A549 (cell line): ENCODE measurements at regions of chr9 and their contacts with region 1.

Region 1: GRCh38 chr9:109616571-109617120 is 118.5 kb upstream of the PTPN3 start:
- DNase-seq: no peak
- ATAC-seq: no peak
- H3K4me3 ChIP-seq: no peak overlapping the region
- H3K27ac ChIP-seq: no peak overlapping the region
- H3K4me1 ChIP-seq: no peaks in the 10 kb centered on the region
- CTCF ChIP-seq: no peak
- EP300 ChIP-seq: no peak
- POLR2A ChIP-seq: no peak
- RAD21 ChIP-seq: no peak

Region 2: DNA sequence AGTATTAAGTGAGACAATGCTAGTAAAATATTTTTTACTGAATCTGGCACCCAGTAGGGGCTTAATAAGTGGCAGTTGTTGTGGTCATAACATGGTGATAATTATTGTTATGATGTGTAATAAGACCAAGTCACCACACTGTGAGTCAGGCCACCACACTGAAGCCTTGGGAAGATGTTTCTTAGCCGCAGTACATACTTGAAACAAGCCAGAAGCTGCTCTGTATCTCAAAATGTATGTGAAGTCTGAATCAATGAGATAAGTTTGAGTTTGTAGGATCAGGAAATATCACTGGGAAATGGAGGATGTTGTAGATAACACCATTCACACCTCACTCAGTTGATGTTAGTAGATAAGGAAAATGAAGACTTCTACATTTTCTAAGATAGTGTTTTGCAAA is 67.3 kb before region 1 on chr9:
- CTCF ChIA-PET with region 1: no interaction called
- POLR2A ChIA-PET with region 1: no interaction called
- DNase-seq: no peak
- ATAC-seq: no peak
- H3K4me3 ChIP-seq: no peak overlapping the region
- H3K27ac ChIP-seq: no peak overlapping the region
- H3K4me1 ChIP-seq: no peaks in the 10 kb centered on the region
- CTCF ChIP-seq: no peak
- EP300 ChIP-seq: no peak
- POLR2A ChIP-seq: no peak
- RAD21 ChIP-seq: no peak

Region 3: DNA sequence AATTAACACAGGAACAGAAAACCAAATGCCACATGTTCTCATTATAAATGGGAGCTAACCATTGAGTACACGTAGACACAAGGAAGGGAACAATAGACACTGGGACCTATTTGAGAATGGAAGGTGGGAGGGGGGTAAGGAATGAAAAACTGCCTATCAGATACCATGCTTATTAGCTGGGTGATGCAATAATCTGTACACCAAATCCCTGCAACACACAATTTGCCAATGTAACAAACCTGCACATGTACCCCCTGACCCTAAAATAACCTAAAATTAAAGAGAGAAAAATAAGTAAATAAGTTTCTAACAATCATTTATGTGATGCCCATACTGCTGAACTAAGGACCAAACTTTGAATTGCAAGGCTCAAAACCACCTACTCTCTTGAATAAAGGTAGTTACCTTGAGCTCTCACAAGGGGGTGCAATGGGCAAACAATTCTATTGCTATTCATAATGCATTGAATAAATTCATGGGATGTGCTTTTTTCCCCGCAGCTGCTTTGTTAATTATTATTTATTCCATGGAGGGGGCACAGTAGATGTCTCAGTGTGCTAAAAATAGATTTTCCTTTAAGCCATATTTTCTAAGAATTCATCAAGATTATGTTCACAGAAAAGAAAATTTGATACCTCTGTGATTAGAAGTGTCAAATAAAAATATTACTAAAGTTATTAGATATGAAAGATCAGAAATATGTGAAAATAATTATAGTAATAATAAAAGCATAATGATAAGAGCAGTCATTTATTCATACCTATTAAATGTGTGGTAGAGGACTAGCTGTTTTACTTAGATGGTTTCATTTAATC is 42.4 kb before region 1 on chr9:
- CTCF ChIA-PET with region 1: interaction called, 10 read pairs
- POLR2A ChIA-PET with region 1: no interaction called
- DNase-seq: peak; percentile 43 to 58
- ATAC-seq: peak; percentile 85 to 88
- H3K4me3 ChIP-seq: no peak overlapping the region
- H3K27ac ChIP-seq: no peak overlapping the region
- H3K4me1 ChIP-seq: no peaks in the 10 kb centered on the region
- CTCF ChIP-seq: peak; percentile 77
- EP300 ChIP-seq: no peak
- POLR2A ChIP-seq: no peak
- RAD21 ChIP-seq: peak; percentile 83 to 88

Region 4: DNA sequence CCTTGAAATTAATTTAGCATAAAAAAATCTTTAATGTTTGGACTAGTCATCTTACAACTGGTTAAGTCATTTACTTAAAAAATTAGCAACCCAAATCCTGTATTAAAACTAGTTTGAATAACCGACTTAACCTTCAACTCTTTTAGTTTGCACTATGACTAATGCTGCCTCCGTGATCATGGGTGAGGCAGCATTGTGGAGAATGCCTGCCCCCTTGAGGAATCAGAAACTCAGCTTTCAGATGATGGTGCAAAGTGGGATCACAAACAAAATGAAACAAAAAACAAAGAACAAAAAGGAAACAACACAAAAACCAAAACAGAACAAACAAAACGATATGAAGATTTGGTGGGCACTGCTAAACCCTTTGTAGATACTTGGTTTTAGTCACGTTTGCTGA is 36.3 kb after region 1 on chr9:
- CTCF ChIA-PET with region 1: no interaction called
- POLR2A ChIA-PET with region 1: no interaction called
- DNase-seq: peak; percentile 30 to 36
- ATAC-seq: peak; percentile 88 to 96
- H3K4me3 ChIP-seq: no peak overlapping the region
- H3K27ac ChIP-seq: no peak overlapping the region
- H3K4me1 ChIP-seq: 0 out of 3 replicates have a peak, but pooled peaks cover 3% of the 10 kb centered on the region
- CTCF ChIP-seq: peak; percentile 58
- EP300 ChIP-seq: no peak
- POLR2A ChIP-seq: no peak
- RAD21 ChIP-seq: peak; percentile 62